Endothelial cell of umbilical vein (primary cell): ENCODE measurements at regions of chr13 and their contacts with region 1.

Region 1: GRCh38 chr13:96958286-96958891 is 35.9 kb downstream of the OXGR1 start:
- DNase-seq: peak; percentile 38
- H3K4me3 ChIP-seq: no peak overlapping the region
- H3K27ac ChIP-seq: no peak overlapping the region
- H3K4me1 ChIP-seq: no peaks in the 10 kb centered on the region
- H3K27me3 ChIP-seq: peaks cover 5 to 9% of the 10 kb centered on the region in 2 experiments
- CTCF ChIP-seq: peak; percentile 56 to 74
- POLR2A ChIP-seq: no peak

Region 2: GRCh38 chr13:96817336-96817941 is 140.9 kb before region 1 on chr13:
- CTCF ChIA-PET with region 1: interaction called, 13 read pairs
- POLR2A ChIA-PET with region 1: no interaction called
- dilution Hi-C with region 1: no loop called
- intact Hi-C with region 1: loop called (anchors 2 kb)
- DNase-seq: peak; percentile 10
- H3K4me3 ChIP-seq: no peak overlapping the region
- H3K27ac ChIP-seq: no peak overlapping the region
- H3K4me1 ChIP-seq: no peaks in the 10 kb centered on the region
- H3K27me3 ChIP-seq: no peaks in the 10 kb centered on the region
- CTCF ChIP-seq: peak; percentile 17 to 29
- POLR2A ChIP-seq: no peak

Region 3: DNA sequence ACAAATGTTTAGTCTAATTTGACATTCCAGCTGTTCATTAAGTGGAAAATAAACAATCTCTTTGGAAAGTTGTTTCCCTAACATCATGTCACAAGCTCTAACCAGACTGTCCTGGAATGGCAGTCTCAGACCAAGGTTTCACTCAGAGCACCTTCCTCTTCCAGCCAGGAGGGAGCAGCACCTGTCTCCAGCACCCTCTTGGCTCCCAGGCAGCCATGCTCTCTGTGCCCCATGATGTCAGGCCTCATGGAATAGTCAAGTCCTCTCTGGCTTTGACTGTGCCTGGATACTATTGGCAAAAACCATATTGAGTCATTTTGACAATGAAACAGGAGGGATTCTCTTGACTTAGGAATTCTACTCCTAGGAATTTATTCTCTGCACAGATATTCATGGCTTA is 135.5 kb before region 1 on chr13:
- CTCF ChIA-PET with region 1: interaction called, 13 read pairs
- POLR2A ChIA-PET with region 1: no interaction called
- dilution Hi-C with region 1: no loop called
- intact Hi-C with region 1: loop called (anchors 2 kb)
- DNase-seq: peak; percentile 9
- H3K4me3 ChIP-seq: no peak overlapping the region
- H3K27ac ChIP-seq: no peak overlapping the region
- H3K4me1 ChIP-seq: no peaks in the 10 kb centered on the region
- H3K27me3 ChIP-seq: no peaks in the 10 kb centered on the region
- CTCF ChIP-seq: peak; percentile 21 to 38
- POLR2A ChIP-seq: no peak

Region 4: GRCh38 chr13:96934889-96935489 is 23.4 kb before region 1 on chr13:
- CTCF ChIA-PET with region 1: interaction called, 11 read pairs
- POLR2A ChIA-PET with region 1: no interaction called
- dilution Hi-C with region 1: no loop called
- intact Hi-C with region 1: no loop called
- DNase-seq: no peak
- H3K4me3 ChIP-seq: no peak overlapping the region
- H3K27ac ChIP-seq: no peak overlapping the region
- H3K4me1 ChIP-seq: no peaks in the 10 kb centered on the region
- H3K27me3 ChIP-seq: no peaks in the 10 kb centered on the region
- CTCF ChIP-seq: no peak
- POLR2A ChIP-seq: no peak

Region 5: DNA sequence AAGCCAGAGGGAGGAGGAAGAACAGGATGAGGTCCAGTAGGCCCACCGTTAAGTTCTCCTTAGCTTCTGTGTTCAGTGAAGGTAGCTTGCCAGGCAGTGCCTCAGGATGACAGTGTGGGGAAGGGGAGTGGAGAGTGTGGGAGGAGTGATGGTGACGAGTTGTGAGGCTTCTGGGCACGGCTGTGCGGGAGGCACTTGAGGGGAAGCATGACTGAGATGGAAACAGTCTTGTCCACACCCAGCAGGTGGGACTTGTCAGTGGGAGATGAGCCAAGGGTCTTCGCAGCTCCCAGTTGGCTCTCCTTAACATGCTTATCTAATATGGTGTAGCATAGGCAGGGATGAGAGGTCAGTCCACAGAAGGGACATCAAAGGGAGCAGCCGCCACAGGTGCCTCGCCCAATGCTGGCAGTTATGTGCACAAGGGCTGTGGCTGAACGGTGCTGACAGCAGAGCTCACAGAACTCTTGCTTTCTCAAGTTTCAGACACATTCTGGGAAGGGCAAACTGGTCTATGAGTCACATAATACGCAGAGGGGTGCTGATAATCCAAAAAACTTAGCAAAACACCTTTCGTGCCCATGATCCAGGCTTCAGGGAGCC is 11.6 kb before region 1 on chr13:
- CTCF ChIA-PET with region 1: interaction called, 26 read pairs
- POLR2A ChIA-PET with region 1: no interaction called
- dilution Hi-C with region 1: no loop called
- intact Hi-C with region 1: no loop called
- DNase-seq: no peak
- H3K4me3 ChIP-seq: no peak overlapping the region
- H3K27ac ChIP-seq: no peak overlapping the region
- H3K4me1 ChIP-seq: no peaks in the 10 kb centered on the region
- H3K27me3 ChIP-seq: peaks cover 0 to 2% of the 10 kb centered on the region in 2 experiments
- CTCF ChIP-seq: no peak
- POLR2A ChIP-seq: no peak